ENCODE measurements at regions of chr1 and their contacts with region 1.

Region 1: DNA sequence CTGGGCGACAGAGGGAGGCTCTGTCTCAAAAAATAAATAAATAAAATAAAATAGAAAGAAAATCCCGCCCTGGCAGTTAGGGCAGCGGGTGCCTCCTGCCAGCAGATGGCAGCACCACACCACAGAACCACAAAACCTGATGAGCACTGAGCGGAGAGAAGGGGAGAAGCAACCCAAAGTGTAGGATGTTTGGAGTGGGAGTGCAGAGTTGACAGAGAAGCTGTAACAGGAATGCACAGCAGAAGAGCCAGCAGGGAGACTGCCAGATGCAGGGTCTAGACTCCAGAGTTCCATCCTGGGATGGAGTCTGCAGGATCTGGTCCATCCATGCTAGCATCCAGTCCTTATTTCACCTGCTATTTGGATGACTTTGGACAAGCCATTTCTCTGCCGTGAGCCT is 29.7 kb upstream of the KIRREL1 start:
- DNase-seq: peak; percentile 77
- ATAC-seq: peak; percentile 86

Region 2: GRCh38 chr1:157894613-157895165 is 69.0 kb before region 1 on chr1:
- intact Hi-C with region 1: no loop called
- DNase-seq: no peak
- ATAC-seq: no peak

Region 3: GRCh38 chr1:158124999-158125398 is 161.3 kb after region 1 on chr1:
- intact Hi-C with region 1: loop called (anchors 2 kb)
- DNase-seq: peak; percentile 85
- ATAC-seq: peak; percentile 99